ENCODE measurements at regions of chr1 and their contacts with region 1.

Region 1: DNA sequence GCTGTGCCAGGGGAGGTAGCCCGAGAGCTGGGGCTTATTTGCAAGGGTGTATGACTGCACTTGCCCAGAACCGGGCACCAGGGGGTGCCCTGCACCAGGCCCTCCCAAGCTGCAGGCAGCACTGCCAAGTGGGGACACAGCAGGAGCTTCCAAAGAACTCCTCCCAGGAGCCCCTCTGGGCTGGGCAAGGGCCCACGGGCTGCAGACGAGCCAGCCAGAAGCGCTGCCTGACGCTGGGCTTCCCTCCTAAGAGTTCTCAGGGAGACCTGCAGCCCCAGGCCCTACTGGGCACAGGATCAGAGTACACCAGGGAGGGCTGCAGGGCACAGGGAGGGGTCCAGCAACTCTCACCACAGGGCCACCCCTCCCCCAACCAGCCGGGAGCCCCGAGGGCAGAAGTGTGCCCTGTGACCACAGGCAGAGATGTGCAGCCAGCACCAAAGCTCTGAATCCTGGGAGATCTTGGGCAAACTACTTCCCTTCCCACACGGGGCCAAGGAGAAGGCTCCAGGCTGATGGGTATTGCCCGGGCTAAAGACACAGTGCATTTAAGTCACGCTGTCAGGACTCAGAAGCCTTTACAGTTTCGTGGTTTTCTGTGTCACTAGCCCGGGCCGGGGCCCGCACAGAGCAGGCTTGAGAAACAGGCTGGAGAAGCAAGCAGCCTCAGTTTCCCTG is 63.4 kb downstream of the KCNAB2 start:
- DNase-seq: peak; percentile 89
- ATAC-seq: peak; percentile 96
- H3K4me3 ChIP-seq: no peak overlapping the region
- H3K27ac ChIP-seq: no peak overlapping the region
- H3K4me1 ChIP-seq: peaks cover 4% of the 10 kb centered on the region; the same call in 1 of the 2 replicates
- H3K27me3 ChIP-seq: no peaks in the 10 kb centered on the region
- CTCF ChIP-seq: peak; percentile 96

Region 2: GRCh38 chr1:5975133-5975880 is 133.8 kb before region 1 on chr1:
- CTCF ChIA-PET with region 1: no interaction called
- POLR2A ChIA-PET with region 1: no interaction called
- intact Hi-C with region 1: no loop called
- DNase-seq: peak; percentile 64
- ATAC-seq: peak; percentile 94
- H3K4me3 ChIP-seq: no peak overlapping the region
- H3K27ac ChIP-seq: no peak overlapping the region
- H3K4me1 ChIP-seq: no peaks in the 10 kb centered on the region
- H3K27me3 ChIP-seq: no peaks in the 10 kb centered on the region
- CTCF ChIP-seq: peak; percentile 90

Region 3: DNA sequence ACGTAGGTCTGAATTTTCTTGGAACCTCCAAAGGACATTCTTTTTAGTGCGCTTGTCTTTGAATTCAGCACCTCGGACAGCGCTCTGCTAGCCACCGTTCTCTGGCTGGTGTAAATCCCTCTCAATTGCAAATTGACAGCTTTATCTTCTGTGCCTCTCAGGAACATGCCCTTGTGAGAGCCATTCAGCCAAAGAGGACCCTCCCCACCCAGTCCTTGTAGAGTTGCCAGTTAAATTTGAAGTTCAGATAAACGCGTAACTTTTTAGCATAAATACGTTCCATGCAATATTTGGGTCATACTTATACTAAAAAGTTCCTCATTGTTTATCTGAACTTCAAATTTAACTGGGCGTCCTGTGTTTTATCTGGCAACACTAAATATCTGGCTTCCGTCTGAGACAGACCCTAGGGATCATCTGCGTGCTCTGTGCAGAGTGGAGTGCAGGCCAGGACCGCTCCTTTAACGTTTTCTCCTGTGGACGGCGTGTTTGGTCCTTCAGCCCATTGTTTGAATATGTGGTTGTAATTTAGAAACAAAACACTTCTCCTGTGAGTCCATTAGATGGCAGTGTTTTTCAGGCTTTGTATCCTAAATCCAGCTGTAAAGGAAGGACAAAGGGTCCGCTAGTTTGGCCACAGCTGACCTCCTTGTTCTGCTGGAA is 56.4 kb before region 1 on chr1:
- CTCF ChIA-PET with region 1: interaction called, 3 read pairs
- POLR2A ChIA-PET with region 1: no interaction called
- intact Hi-C with region 1: loop called (anchors 2 kb)
- DNase-seq: peak; percentile 86
- ATAC-seq: peak; percentile 80
- H3K4me3 ChIP-seq: no peak overlapping the region
- H3K27ac ChIP-seq: no peak overlapping the region
- H3K4me1 ChIP-seq: no peaks in the 10 kb centered on the region
- H3K27me3 ChIP-seq: no peaks in the 10 kb centered on the region
- CTCF ChIP-seq: peak; percentile 94

Region 4: DNA sequence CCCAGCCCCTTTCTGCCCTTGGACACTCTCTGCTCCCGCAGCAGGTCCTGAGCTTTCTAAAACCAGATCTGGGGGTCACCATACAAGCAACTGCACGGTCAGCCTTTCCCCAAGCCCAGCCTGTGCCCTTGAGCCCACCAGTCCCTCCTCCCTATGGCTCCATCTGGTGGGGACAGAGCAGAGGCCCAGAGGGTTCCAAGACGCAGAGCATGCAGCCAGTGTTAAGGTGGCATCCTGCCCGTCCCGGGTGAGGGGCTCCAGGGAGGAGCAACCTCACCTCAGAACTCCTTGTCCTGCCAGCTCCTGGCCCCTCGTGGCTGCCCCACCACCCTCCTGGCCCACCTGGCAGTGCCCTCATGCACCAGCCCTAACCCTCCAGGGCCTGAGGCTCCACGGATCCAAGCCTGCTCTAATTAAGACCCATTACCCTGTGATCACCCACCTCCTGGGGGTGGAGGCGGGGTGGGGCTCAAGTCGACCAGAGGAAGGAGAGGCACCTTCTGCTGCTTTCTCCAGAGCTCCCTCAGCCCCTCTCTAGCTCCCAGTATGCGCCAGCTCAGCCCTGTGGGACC is 62.6 kb after region 1 on chr1:
- CTCF ChIA-PET with region 1: interaction called, 7 read pairs
- POLR2A ChIA-PET with region 1: no interaction called
- intact Hi-C with region 1: loop called (anchors 1 kb)
- DNase-seq: peak; percentile 67
- ATAC-seq: peak; percentile 89
- H3K4me3 ChIP-seq: no peak overlapping the region
- H3K27ac ChIP-seq: no peak overlapping the region
- H3K4me1 ChIP-seq: peaks cover 6% of the 10 kb centered on the region
- H3K27me3 ChIP-seq: no peaks in the 10 kb centered on the region
- CTCF ChIP-seq: peak; percentile 89

Region 5: GRCh38 chr1:6185635-6186382 is 76.7 kb after region 1 on chr1:
- CTCF ChIA-PET with region 1: interaction called, 9 read pairs
- POLR2A ChIA-PET with region 1: interaction called, 3 read pairs
- intact Hi-C with region 1: loop called (anchors 1 kb)
- DNase-seq: peak; percentile 66
- ATAC-seq: peak; percentile 10; the same call in 1 of the 2 replicates
- H3K4me3 ChIP-seq: no peak overlapping the region
- H3K27ac ChIP-seq: no peak overlapping the region
- H3K4me1 ChIP-seq: peaks cover 14% of the 10 kb centered on the region
- H3K27me3 ChIP-seq: peaks cover 1% of the 10 kb centered on the region; the same call in 1 of the 2 replicates
- CTCF ChIP-seq: peak; percentile 88